ENCODE measurements at regions of chr19 and their contacts with region 1.

Region 1: DNA sequence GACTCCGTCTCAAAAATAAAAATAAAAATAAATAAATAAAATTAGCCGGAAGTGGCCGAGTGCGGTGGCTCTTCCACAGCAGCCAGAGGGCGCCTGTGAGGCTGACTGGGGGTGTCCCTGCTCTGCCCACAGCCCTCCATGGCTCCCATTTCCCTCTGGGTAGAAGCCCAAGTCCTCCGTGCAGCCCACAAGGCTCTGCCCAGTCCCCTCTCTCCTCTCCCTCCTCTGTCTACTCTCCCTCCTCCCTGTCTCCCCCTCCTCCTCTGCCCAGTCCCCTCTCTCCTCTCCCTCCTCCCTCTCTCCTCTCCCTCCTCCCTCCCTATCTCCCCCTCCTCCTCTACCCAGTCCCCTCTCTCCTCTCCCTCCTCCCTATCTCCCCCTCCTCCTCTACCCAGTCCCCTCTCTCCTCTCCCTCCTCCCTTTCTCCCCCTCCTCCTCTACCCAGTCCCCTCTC is 20.4 kb downstream of the MISP start:
- DNase-seq: peak; percentile 63
- ATAC-seq: peak; percentile 70
- H3K4me3 ChIP-seq: no peak overlapping the region
- H3K27ac ChIP-seq: no peak overlapping the region
- H3K4me1 ChIP-seq: peaks cover 27% of the 10 kb centered on the region
- H3K27me3 ChIP-seq: no peaks in the 10 kb centered on the region; a peak in 1 of 5 replicates
- CTCF ChIP-seq: peak; percentile 65
- EP300 ChIP-seq: no peak
- POLR2A ChIP-seq: no peak
- RAD21 ChIP-seq: peak; percentile 58

Region 2: GRCh38 chr19:796692-797527 is 25.6 kb after region 1 on chr19 and contains the start of gene PTBP1:
- CTCF ChIA-PET with region 1: no interaction called
- POLR2A ChIA-PET with region 1: no interaction called
- in situ Hi-C with region 1: no loop called
- intact Hi-C with region 1: loop called (anchors 2 kb)
- DNase-seq: peak; percentile 99
- ATAC-seq: peak; percentile 66
- H3K4me3 ChIP-seq: peak within 1 kb of the TSS; percentile 85 to 96 (median 96)
- H3K27ac ChIP-seq: peak within 1 kb of the TSS; percentile 97
- H3K4me1 ChIP-seq: peaks cover 69% of the 10 kb centered on the region
- H3K27me3 ChIP-seq: no peaks in the 10 kb centered on the region; a peak in 1 of 5 replicates
- CTCF ChIP-seq: no peak
- EP300 ChIP-seq: peak; percentile 0 to 66; a peak in 2 of 4 replicates
- POLR2A ChIP-seq: peak; percentile 89 to 94
- RAD21 ChIP-seq: peak; percentile 18
- total RNA-seq, gene PTBP1: 188 and 195 TPM in 2 replicates

Region 3: DNA sequence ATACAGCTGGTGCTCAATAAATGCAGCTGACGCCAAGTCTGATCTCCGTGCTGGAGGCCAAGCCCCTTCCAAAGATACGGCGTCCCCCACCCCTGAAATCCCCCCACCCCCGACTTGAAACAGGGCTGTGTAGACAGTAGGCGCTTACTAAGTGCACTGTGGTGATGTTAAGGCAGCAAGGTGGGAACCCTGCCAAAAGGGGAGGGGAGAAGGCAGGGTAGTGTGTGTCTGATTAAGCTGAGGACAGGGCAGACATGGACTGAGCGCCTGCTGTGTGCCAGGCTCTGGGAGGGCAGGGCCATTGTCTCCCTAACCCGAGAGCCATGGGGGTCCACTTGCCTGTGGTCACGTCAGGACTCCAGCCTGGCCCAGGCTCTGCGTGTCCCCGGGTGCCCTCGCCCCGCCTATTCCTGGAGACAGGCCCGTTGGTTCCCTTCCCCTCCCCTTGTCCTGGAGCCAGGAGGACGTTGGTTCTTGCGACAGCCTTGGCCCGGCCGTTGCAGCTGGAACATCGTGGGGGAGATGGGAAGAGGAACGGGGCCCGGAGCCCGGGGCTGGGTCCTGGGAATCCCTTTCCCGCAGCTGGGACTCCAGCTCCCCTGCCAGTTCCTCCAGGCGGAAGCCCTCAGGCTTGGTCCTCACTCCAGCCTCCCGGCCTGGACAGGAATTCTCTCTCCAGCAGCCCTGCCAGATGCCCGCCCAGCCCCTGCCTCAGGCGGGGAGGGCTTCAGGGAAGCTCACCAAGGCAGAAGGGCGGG is 79.0 kb after region 1 on chr19:
- CTCF ChIA-PET with region 1: no interaction called
- POLR2A ChIA-PET with region 1: no interaction called
- in situ Hi-C with region 1: loop called (anchors 10 kb)
- intact Hi-C with region 1: loop called (anchors 5 kb)
- DNase-seq: no peak
- ATAC-seq: peak; percentile 62
- H3K4me3 ChIP-seq: peak overlapping the region in 1 of 3 experiments; percentile 24; a peak in 1 of 6 replicates
- H3K27ac ChIP-seq: no peak overlapping the region
- H3K4me1 ChIP-seq: peaks cover 21% of the 10 kb centered on the region; the same call in 1 of the 2 replicates
- H3K27me3 ChIP-seq: peaks cover 10 to 49% of the 10 kb centered on the region in 2 experiments
- CTCF ChIP-seq: no peak
- EP300 ChIP-seq: no peak
- POLR2A ChIP-seq: no peak
- RAD21 ChIP-seq: no peak

Region 4: GRCh38 chr19:860481-861101 is 89.2 kb after region 1 on chr19:
- CTCF ChIA-PET with region 1: interaction called, 5 read pairs
- POLR2A ChIA-PET with region 1: no interaction called
- in situ Hi-C with region 1: loop called (anchors 10 kb)
- intact Hi-C with region 1: loop called (anchors 5 kb)
- DNase-seq: peak; percentile 53
- ATAC-seq: peak; percentile 75
- H3K4me3 ChIP-seq: peak overlapping the region; percentile 30 to 67 (median 60); a peak in 5 of 6 replicates
- H3K27ac ChIP-seq: no peak overlapping the region
- H3K4me1 ChIP-seq: peaks cover 19% of the 10 kb centered on the region
- H3K27me3 ChIP-seq: no peaks in the 10 kb centered on the region; a peak in 1 of 5 replicates
- CTCF ChIP-seq: peak; percentile 69
- EP300 ChIP-seq: no peak
- POLR2A ChIP-seq: peak; percentile 29 to 61; a peak in 1 of 4 replicates
- RAD21 ChIP-seq: peak; percentile 36; the same call in 1 of the 2 replicates

Region 5: GRCh38 chr19:917323-918151 is 146.2 kb after region 1 on chr19 and contains the start of gene KISS1R:
- CTCF ChIA-PET with region 1: interaction called, 14 read pairs
- POLR2A ChIA-PET with region 1: no interaction called
- in situ Hi-C with region 1: loop called (anchors 5 kb)
- intact Hi-C with region 1: loop called (anchors 5 kb)
- DNase-seq: peak; percentile 71
- ATAC-seq: peak; percentile 74
- H3K4me3 ChIP-seq: peak within 1 kb of the TSS; percentile 52 to 96 (median 57)
- H3K27ac ChIP-seq: peak within 1 kb of the TSS; percentile 71
- H3K4me1 ChIP-seq: peaks cover 24% of the 10 kb centered on the region
- H3K27me3 ChIP-seq: no peaks in the 10 kb centered on the region; a peak in 1 of 5 replicates
- CTCF ChIP-seq: peak; percentile 90
- EP300 ChIP-seq: no peak
- POLR2A ChIP-seq: peak in 1 of 2 experiments; percentile 76; a peak in 2 of 4 replicates
- RAD21 ChIP-seq: peak; percentile 92
- total RNA-seq, gene KISS1R: 3.9 and 10.2 TPM in 2 replicates

Region 6: GRCh38 chr19:925526-926322 is 154.4 kb after region 1 on chr19 and contains the start of gene ARID3A:
- CTCF ChIA-PET with region 1: interaction called, 10 read pairs
- POLR2A ChIA-PET with region 1: no interaction called
- in situ Hi-C with region 1: loop called (anchors 5 kb)
- intact Hi-C with region 1: no loop called
- DNase-seq: peak; percentile 82
- ATAC-seq: peak; percentile 63
- H3K4me3 ChIP-seq: peak within 1 kb of the TSS; percentile 88 to 98 (median 96)
- H3K27ac ChIP-seq: peak within 1 kb of the TSS; percentile 92
- H3K4me1 ChIP-seq: peaks cover 45% of the 10 kb centered on the region
- H3K27me3 ChIP-seq: no peaks in the 10 kb centered on the region
- CTCF ChIP-seq: no peak
- EP300 ChIP-seq: peak in 1 of 2 experiments; percentile 32; a peak in 2 of 4 replicates
- POLR2A ChIP-seq: peak in 1 of 2 experiments; percentile 52; a peak in 3 of 4 replicates
- RAD21 ChIP-seq: no peak; the same call in 1 of the 2 replicates
- total RNA-seq, gene ARID3A: 53.8 and 71.3 TPM in 2 replicates

Measured in HepG2 (cell line).